ENCODE measurements at regions of chr3 and their contacts with region 1.

Region 1: GRCh38 chr3:158790901-158791589 is 10.8 kb upstream of the MFSD1 start:
- DNase-seq: peak; percentile 45
- H3K4me3 ChIP-seq: peak overlapping the region in 3 of 4 donors; percentile 23 to 39 (median 32)
- H3K27ac ChIP-seq: no peak overlapping the region
- H3K4me1 ChIP-seq: peaks cover 3 to 28% (median 23%) of the 10 kb centered on the region in 4 donors
- H3K27me3 ChIP-seq: no peaks in the 10 kb centered on the region
- CTCF ChIP-seq: peak; percentile 79 to 89 (median 85)
- EP300 ChIP-seq: no peak
- POLR2A ChIP-seq: no peak

Region 2: GRCh38 chr3:158127250-158128219 is 663.5 kb before region 1 on chr3:
- intact Hi-C with region 1: no loop called
- DNase-seq: no peak
- H3K4me3 ChIP-seq: no peak overlapping the region
- H3K27ac ChIP-seq: no peak overlapping the region
- H3K4me1 ChIP-seq: no peaks in the 10 kb centered on the region
- H3K27me3 ChIP-seq: no peaks in the 10 kb centered on the region
- CTCF ChIP-seq: no peak
- EP300 ChIP-seq: no peak
- POLR2A ChIP-seq: no peak

Region 3: DNA sequence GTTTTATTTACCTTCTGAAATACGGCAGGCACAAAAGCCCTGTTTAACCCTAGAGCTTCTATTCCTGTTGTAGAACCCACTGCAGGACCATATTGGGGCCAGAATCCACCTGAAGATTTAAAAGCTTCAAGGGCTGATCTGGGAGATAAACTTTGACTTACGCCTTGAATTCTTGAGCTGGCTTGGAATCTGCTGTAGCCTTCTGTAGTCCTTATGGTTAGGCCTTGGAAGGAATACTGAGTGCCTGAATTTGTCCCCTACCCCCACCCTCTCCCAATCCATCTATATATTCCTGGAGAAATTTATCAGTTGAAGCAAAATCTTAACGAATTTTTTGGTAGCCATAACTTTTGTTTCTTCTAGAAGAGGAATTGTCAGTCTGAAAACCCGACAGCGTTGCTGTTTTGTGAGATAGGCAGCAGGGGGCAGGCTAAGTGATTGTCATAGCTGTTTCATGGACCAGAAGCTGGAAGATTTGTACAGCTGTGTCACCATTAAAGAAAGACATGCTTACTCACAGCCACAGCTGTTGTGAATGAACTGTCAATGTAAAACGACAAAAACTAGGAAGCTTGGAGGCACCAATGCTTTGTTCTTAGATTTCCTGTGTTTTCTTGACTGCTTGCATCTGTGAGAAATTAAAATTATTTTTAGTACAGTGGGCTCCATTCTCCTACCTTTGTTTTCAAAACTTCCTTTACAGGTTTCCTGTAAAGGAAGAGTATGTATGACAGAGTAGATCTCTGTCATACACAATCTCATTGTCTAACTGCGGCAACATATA is 131.4 kb before region 1 on chr3:
- intact Hi-C with region 1: loop called (anchors 5 kb)
- DNase-seq: no peak
- H3K4me3 ChIP-seq: no peak overlapping the region
- H3K27ac ChIP-seq: peak overlapping the region in 2 of 4 donors; percentile 15 to 35
- H3K4me1 ChIP-seq: peaks cover 0 to 8% (median 0%) of the 10 kb centered on the region in 4 donors
- H3K27me3 ChIP-seq: no peaks in the 10 kb centered on the region
- CTCF ChIP-seq: peak; percentile 48 to 68 (median 58)
- EP300 ChIP-seq: no peak
- POLR2A ChIP-seq: no peak

Region 4: DNA sequence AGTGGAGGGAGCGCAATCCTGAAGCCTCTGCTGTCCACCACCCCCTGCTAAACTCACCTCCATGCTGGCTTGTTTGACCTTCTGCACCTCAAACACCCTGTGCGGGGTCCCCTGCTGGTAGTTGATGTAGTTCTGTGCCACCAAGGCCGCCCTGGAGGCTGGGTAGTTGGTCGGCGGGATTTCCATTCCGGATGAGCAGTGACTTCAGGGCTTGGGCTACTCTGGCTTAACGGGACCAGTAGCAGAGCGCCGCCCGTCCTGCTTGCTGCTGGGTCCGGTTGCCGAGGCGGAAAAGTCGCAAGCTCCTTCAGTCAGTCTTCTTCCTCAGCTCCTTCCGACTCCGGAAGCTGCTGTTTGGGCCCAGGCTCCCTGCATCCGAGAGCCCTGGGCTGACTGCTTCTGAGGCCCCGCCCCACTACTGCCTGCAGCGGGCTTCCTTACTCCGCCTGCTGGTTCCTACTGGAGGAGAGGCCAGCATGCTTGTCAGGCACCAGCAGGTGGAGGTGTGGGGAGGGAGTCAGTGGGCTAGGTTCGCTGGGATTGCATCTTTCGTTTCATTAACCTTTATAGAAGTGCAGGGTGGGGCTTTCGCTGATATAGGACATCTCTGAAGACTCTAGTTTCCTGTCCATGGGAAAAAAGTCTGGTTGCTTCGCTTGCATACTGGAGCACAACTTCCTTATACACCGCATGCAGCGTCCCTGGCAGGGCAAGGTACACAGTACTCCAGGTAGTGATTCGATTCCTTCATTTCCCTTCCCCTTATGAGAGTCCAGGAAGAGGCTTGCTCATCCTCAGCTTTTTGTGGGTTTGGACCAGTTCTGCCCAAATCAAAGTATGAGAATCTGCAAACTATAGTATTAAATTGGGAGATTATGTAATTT is 118.5 kb before region 1 on chr3 and contains the start of gene LXN:
- intact Hi-C with region 1: loop called (anchors 5 kb)
- DNase-seq: peak; percentile 94
- H3K4me3 ChIP-seq: peak within 1 kb of the TSS; percentile 56 to 68 (median 62)
- H3K27ac ChIP-seq: peak within 1 kb of the TSS; percentile 77 to 85 (median 81)
- H3K4me1 ChIP-seq: peaks cover 3 to 24% (median 17%) of the 10 kb centered on the region in 4 donors
- H3K27me3 ChIP-seq: no peaks in the 10 kb centered on the region
- CTCF ChIP-seq: peak; percentile 46 to 72 (median 54)
- EP300 ChIP-seq: no peak
- POLR2A ChIP-seq: no peak
- total RNA-seq, gene LXN: 7.2 to 9.2 (median 7.9) TPM

Region 5: DNA sequence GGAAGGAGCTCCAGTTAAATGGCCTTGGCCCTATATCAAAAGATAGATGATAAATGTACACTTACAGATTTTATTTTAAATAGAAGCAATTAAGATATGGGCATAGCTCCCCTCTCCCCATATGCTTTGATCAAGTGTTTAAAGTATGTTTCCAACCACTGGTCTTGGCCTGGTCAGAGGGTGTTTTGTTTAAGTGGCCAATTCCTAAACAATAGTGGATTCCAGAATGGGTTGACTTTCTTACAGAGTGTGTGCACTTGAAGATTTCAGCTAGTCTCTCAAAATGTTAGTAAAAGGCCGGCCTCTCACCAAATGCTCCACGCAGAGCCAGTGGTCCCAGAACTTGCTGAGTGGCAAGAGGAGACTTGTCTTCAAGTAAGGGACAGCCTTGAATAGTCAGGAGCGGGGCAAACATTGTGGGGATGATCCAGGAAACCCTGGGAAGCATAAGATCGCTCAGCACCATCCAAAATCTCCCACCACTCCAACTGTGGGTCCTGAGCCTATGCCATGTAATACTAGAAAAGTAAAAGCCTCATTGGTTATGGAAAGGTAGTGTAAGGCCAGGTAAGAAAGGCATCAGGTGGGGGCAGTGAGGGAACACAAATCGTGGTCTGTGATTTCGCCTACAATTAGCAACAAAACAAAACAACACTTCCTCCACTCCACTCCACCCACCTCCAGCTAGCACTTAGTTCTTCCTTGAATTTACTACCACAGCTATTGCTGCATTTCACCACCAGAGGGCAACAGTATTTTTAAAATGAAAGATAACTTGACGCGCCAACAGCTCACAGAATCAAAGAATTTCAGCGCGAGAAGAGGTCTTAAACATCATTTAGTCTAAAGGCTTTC is 63.6 kb before region 1 on chr3:
- intact Hi-C with region 1: loop called (anchors 1 kb)
- DNase-seq: no peak
- H3K4me3 ChIP-seq: peak overlapping the region in 3 of 4 donors; percentile 20 to 36 (median 31)
- H3K27ac ChIP-seq: peak overlapping the region; percentile 44 to 65 (median 58)
- H3K4me1 ChIP-seq: peaks cover 28 to 86% (median 60%) of the 10 kb centered on the region in 4 donors
- H3K27me3 ChIP-seq: peaks cover 0 to 3% (median 0%) of the 10 kb centered on the region in 4 donors
- CTCF ChIP-seq: peak; percentile 89 to 95 (median 89)
- EP300 ChIP-seq: no peak
- POLR2A ChIP-seq: no peak